AG04450 (cell line): ENCODE measurements at regions of chr11 and their contacts with region 1.

Region 1: DNA sequence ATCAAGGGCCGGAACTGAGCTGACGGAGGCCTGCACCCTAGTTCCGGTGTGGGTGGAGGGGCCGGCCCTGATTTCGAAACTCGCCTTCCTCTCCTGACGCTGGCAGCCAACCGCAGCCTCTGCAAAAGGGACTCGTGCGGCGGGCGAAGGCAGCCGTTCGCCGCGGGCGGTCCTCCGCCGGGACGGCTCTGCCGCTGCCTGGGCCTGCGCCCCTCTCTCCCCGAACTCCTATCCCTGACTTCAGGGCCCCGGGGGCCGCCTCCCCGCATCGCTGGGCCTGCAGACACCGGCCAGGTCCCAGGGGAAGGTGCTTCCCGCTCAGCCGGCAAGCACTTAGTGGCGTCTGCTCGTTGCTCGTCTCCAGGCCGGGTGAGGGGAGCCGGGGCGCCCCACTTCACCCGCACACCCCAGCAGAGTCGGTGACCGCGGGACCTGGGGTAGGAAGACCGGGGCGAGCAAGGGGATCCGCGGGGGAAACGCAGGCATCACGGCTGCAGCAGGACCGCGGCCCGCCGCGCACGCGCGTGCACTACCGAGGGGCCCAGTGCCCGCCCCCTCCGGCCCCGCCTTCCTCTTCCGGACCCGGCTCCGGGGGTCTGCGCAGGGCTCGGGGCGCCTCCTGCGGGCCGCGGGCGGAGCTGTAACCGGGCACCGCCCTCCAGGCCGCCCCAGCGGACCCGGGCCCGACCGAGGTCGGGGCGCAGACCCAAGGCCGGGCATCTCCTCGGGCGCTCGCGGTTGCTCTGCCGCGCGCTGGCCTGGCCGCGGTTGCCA is 464 bp upstream of the ANKRD13D start:
- DNase-seq: peak; percentile 66
- H3K4me3 ChIP-seq: peak overlapping the region; percentile 76
- H3K27ac ChIP-seq: peak overlapping the region; percentile 97
- H3K27me3 ChIP-seq: no peaks in the 10 kb centered on the region
- CTCF ChIP-seq: 0 out of 2 replicates have a peak, but pooled peaks have one; percentile 28

Region 2: DNA sequence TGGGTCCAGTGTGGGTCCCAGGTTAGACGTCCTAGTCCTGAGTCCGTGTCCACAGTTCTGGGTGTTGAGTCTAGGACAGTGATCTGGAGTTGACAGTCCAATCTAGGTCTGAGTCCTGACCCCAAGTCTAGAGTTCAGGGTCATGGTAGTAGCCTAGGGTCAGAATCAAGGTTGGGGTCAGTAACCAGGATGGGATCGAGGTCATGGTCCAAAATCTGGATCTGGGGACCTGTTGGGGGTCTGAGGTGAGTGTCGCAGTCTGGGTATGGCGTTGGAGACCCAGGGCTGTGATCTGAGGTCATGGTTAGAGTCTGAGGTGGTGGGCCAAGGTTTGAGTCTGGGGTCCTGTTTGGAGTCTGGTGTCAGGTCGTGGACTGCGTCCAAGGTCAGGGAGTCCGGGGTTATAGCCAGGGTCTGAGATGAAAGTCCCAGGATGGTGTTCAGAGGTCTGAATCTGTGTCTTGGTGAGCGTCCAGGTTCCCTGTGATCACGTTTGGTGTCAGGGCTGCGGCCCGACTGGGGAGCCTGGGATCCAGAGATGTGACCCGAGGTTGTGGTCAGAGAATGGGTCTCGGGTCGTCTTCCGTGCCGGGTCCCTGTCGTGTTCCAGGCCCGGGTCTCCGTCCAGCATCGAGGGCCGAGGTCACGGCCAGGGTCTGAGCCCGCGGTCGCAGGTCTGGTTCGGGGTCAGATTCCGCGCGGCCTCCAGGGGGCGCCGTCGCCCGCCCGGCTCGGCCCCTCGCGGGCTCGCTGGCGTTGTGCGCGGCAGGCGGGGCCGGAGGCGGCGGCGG is 22.8 kb before region 1 on chr11:
- CTCF ChIA-PET with region 1: interaction called, 16 read pairs
- POLR2A ChIA-PET with region 1: interaction called, 5 read pairs
- DNase-seq: no peak
- H3K4me3 ChIP-seq: peak overlapping the region; percentile 54
- H3K27ac ChIP-seq: no peak overlapping the region
- H3K27me3 ChIP-seq: no peaks in the 10 kb centered on the region
- CTCF ChIP-seq: peak; percentile 62

Region 3: DNA sequence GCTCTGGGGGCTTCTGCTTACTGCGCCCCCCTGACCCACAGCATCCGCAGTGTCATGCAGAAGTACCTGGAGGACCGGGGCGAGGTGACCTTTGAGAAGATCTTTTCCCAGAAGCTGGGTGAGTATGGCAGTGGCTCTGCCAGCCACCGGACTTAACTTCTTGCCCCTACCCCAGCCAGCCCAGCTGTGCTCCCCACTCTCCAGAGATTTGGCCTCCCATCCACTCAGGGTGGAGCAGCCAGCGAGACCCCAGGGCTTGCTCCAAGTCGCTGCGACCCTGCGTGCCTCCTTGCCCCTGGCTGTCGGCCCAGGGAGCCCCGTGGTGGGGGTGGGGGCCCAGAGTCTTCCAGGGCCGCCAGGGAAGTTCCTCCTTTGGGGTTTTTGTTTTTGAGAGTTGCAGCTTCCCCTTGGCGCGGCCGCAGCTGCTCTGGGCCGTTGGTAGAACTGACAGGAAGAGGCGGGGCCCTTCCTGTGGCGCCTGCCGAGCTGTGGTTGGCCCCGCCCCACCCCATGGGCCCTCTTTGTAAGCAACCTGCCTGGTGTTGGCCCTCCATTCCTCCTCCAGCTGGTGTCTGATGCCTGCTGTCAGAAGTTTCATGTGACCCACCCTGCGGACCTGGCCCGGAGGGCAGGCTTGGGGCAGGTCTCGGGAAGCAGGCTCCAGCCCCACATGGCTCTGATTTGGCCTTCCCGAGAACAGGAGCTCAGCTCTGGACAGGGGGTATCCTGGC is 11.2 kb before region 1 on chr11:
- CTCF ChIA-PET with region 1: interaction called, 4 read pairs
- POLR2A ChIA-PET with region 1: interaction called, 20 read pairs
- DNase-seq: no peak
- H3K4me3 ChIP-seq: peak overlapping the region; percentile 57
- H3K27ac ChIP-seq: peak overlapping the region; percentile 86
- H3K27me3 ChIP-seq: no peaks in the 10 kb centered on the region
- CTCF ChIP-seq: no peak

Region 4: DNA sequence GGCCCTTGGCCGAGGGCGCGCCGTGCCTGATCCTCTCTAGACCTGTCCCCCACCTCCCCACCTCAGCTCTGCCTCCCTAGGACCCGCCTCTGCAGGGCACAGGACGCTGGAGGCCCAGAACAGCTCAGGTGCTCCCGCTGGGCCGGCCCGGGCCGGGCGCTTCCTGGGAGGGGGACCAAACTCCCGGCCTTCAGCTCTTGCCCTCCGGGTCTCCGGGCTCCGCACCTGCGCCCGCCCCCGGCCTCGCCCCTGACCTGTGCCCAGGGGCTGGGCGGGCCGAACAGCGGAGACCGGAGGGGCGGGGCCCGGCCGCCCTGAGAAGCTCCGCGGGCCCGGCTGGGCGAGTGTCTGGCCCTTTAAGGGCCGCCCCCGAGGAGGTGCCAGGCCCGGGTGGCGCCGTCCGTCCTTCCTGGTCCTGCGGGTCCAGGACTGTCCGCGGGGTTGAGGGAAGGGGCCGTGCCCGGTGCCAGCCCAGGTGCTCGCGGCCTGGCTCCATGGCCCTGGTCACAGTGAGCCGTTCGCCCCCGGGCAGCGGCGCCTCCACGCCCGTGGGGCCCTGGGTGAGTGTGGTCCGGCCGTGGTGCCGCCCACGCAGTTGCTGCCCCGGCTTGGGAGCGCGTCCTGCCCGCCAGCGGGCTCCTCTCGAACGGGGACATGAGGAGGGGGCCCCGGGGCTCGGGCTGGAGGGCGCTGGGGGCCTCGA is 14.6 kb after region 1 on chr11 and contains the start of gene SSH3:
- CTCF ChIA-PET with region 1: interaction called, 4 read pairs
- POLR2A ChIA-PET with region 1: interaction called, 13 read pairs
- DNase-seq: no peak
- H3K4me3 ChIP-seq: peak within 1 kb of the TSS; percentile 79
- H3K27ac ChIP-seq: peak within 1 kb of the TSS; percentile 21
- H3K27me3 ChIP-seq: no peaks in the 10 kb centered on the region
- CTCF ChIP-seq: no peak
- polyA plus RNA-seq, gene SSH3: 16.5 and 20.0 TPM in 2 replicates